GM13977 (cell line): ENCODE measurements at regions of chr2 and their contacts with region 1.

Region 1: DNA sequence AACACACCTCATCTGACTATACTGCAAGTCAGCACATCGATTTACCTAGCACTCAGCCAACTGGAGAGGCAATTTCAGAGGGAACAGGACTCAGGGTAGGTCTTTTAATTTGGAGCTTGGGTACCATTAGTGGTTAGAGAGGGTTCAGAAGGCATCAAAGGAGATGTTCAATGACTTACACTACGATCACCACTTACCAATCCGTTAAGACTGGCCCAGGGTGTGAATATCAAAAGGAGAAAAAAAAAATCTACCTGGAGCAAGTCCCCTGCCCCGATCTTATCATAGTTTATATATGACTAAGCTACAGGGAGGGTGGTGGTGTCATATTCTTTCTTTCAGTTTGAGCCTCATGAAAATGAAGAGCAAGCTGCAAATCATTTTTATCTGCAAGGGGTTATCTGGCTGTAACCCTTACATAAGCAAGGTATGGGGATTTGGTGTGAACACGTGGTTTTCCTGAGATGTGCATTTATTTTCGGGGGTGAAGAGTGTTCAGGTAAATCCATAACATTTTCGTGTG is 36.4 kb upstream of the GPD2 start:
- DNase-seq: peak; percentile 69
- CTCF ChIP-seq: no peak

Region 2: DNA sequence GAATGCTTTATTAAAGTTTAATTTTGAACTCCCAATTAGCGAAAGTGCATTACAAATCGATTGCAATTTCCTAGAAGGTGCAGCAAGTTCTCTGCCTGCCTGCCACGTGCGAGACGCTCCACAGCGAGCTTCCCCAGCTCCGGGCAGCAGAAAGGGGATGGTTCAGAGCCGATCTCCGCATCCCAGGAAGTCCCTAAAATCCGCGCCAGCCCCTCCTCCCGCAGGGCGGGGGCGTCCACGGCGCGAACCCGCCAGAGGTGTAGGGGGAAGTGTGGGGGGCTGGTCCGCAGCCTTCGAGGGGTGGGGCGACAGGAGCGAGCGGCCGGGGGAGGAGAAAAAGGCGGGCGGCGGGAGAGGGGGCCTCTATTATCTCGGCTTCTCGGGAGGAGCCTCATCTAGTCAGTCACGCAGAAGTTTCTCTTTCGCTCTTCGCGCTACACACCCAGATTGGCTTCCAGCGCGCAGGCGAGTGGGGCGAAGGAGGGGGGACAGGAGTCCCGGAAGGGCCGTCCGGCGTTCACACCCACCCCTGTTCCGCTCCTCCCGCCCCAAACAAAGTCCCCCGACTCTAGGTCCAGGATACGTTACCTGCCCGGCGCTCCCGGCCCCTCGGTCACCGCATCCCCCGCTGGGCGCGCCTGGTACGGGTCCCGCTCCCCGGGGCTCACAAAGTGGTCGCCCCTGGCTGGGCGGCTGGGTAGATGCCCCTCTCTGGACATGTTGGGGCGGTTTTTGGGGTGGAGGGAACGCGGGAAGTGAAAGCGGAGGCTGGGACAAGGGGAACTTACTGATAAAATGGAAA is 58.1 kb before region 1 on chr2:
- in situ Hi-C with region 1: loop called (anchors 10 kb)
- DNase-seq: peak; percentile 94
- CTCF ChIP-seq: no peak